Activated CD4-positive, alpha-beta T cell treated with anti-CD3 and anti-CD28 coated beads for 36 hours (primary cell): ENCODE measurements at regions of chr18 and their contacts with region 1.

Region 1: DNA sequence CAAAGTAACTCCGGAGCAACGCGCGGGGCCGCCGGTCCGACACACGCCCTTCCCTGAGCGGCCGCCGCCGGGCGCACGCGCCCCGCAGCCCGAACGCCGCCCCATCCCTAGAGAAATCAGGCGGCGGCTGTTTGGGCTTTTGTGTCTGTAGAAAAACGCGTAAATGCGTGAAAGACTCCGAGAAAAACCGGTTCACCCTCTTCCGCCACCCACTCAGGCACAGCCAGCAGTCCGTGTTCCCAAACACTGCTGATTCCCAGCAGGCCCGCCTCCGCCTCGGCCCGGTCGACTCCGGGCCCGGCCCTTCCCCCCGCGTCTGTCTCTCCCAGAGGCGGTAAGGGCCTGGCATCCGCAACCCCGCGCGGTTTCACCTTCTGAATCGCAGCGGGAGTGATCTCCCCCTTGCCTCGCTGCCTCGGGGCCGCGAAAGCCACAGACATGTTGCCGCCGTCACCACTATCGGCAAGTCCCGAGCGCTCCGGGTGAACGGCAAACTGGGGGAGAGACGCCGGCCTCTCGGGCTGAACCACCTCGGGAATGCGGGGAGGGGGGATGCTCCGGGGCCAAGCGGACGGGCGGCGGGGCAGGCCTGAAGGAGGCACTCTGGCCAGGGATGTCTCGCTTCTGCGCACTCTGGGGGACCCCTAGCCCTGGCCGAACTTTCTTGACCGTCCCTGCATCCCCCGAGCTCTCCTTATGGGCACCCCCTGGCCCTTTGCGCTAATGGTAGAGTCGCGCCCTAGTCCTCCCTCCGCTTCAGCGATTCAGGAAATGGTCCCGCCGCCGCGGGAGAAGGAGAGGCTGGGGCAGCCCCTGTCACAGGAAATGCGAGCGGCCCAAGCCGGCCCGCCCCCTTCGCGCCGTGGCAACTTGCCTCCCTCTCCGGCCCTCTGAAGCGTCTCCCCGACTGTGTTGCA is at the start of gene SS18:
- DNase-seq: peak; percentile 95
- ATAC-seq: peak; percentile 85
- H3K4me3 Mint-ChIP-seq: peak within 1 kb of the TSS; percentile 77
- H3K27ac Mint-ChIP-seq: peak within 1 kb of the TSS; percentile 94
- H3K4me1 Mint-ChIP-seq: peaks cover 33% of the 10 kb centered on the region
- H3K27me3 Mint-ChIP-seq: no peaks in the 10 kb centered on the region
- total RNA-seq, gene SS18: 57.8 to 69.7 TPM

Region 2: GRCh38 chr18:25351777-25352628 is 738.4 kb before region 1 on chr18 and contains the start of gene ZNF521:
- CTCF ChIA-PET with region 1: no interaction called
- POLR2A ChIA-PET with region 1: no interaction called
- intact Hi-C with region 1: loop called in 1 of 2 experiments (anchors 5 kb)
- DNase-seq: peak; percentile 72
- ATAC-seq: peak; percentile 88
- H3K4me3 Mint-ChIP-seq: peak within 1 kb of the TSS; percentile 71
- H3K27ac Mint-ChIP-seq: no peak within 1 kb of the TSS
- H3K4me1 Mint-ChIP-seq: peaks cover 10% of the 10 kb centered on the region
- H3K27me3 Mint-ChIP-seq: peaks cover 48% of the 10 kb centered on the region
- total RNA-seq, gene ZNF521: not detected

Region 3: DNA sequence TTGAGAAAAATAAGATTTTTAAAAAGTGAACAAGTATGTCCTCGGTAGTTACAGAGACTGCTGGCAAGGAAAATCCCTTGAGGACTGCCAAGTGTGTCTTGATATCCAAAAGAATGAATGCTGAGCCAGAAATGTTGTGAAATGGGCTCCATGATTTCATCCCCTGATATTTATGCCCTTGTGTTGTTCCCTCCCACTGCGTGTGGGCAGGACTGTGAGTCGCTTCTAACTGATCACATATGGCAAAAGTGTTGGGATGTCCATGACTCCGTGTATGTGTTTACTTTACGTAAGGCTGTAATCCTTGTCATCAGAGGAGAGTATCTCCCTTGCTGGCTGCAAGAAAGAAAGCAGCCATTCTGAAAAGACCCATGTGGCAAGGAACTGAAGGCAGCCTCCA is 285.1 kb before region 1 on chr18:
- CTCF ChIA-PET with region 1: no interaction called
- POLR2A ChIA-PET with region 1: no interaction called
- intact Hi-C with region 1: no loop called
- DNase-seq: no peak
- ATAC-seq: no peak
- H3K4me3 Mint-ChIP-seq: no peak overlapping the region
- H3K27ac Mint-ChIP-seq: no peak overlapping the region
- H3K4me1 Mint-ChIP-seq: no peaks in the 10 kb centered on the region
- H3K27me3 Mint-ChIP-seq: peaks cover 4% of the 10 kb centered on the region

Region 4: GRCh38 chr18:26190506-26190905 is 100.1 kb after region 1 on chr18:
- CTCF ChIA-PET with region 1: no interaction called
- POLR2A ChIA-PET with region 1: no interaction called
- intact Hi-C with region 1: no loop called
- DNase-seq: peak; percentile 59
- ATAC-seq: peak; percentile 92
- H3K4me3 Mint-ChIP-seq: peak overlapping the region; percentile 71
- H3K27ac Mint-ChIP-seq: peak overlapping the region; percentile 76
- H3K4me1 Mint-ChIP-seq: peaks cover 14% of the 10 kb centered on the region
- H3K27me3 Mint-ChIP-seq: no peaks in the 10 kb centered on the region

Region 5: GRCh38 chr18:26215247-26215970 is 125.0 kb after region 1 on chr18:
- CTCF ChIA-PET with region 1: no interaction called
- POLR2A ChIA-PET with region 1: no interaction called
- intact Hi-C with region 1: loop called in 1 of 2 experiments (anchors 1 kb)
- DNase-seq: peak; percentile 72
- ATAC-seq: peak; percentile 98
- H3K4me3 Mint-ChIP-seq: peak overlapping the region; percentile 65
- H3K27ac Mint-ChIP-seq: peak overlapping the region; percentile 97
- H3K4me1 Mint-ChIP-seq: peaks cover 38% of the 10 kb centered on the region
- H3K27me3 Mint-ChIP-seq: no peaks in the 10 kb centered on the region

Region 6: GRCh38 chr18:26548429-26549262 is 458.3 kb after region 1 on chr18 and contains the start of gene KCTD1:
- CTCF ChIA-PET with region 1: no interaction called
- POLR2A ChIA-PET with region 1: no interaction called
- intact Hi-C with region 1: loop called in 1 of 2 experiments (anchors 1 kb)
- DNase-seq: peak; percentile 87
- ATAC-seq: peak; percentile 80
- H3K4me3 Mint-ChIP-seq: peak within 1 kb of the TSS; percentile 73
- H3K27ac Mint-ChIP-seq: no peak within 1 kb of the TSS
- H3K4me1 Mint-ChIP-seq: peaks cover 28% of the 10 kb centered on the region
- H3K27me3 Mint-ChIP-seq: peaks cover 38% of the 10 kb centered on the region
- total RNA-seq, gene KCTD1: 3.2 to 4.2 TPM